Transverse colon (tissue), 4 donors: ENCODE measurements at regions of chr20 and their contacts with region 1.

Region 1: GRCh38 chr20:39874049-39874888 is 814.8 kb downstream of the MAFB start:
- DNase-seq: peak; percentile 72
- H3K4me3 ChIP-seq: no peak overlapping the region
- H3K27ac ChIP-seq: no peak overlapping the region
- H3K4me1 ChIP-seq: peaks cover 0 to 8% (median 0%) of the 10 kb centered on the region in 4 donors
- H3K27me3 ChIP-seq: no peaks in the 10 kb centered on the region
- CTCF ChIP-seq: peak; percentile 61 to 84 (median 76)
- EP300 ChIP-seq: no peak
- POLR2A ChIP-seq: no peak

Region 2: GRCh38 chr20:39264506-39265172 is 609.6 kb before region 1 on chr20:
- in situ Hi-C with region 1: loop called in 1 of 4 experiments (anchors 25 kb)
- intact Hi-C with region 1: loop called (anchors 10 kb)
- DNase-seq: peak; percentile 42
- H3K4me3 ChIP-seq: no peak overlapping the region
- H3K27ac ChIP-seq: no peak overlapping the region
- H3K4me1 ChIP-seq: no peaks in the 10 kb centered on the region
- H3K27me3 ChIP-seq: no peaks in the 10 kb centered on the region
- CTCF ChIP-seq: peak; percentile 63 to 81 (median 75)
- EP300 ChIP-seq: no peak
- POLR2A ChIP-seq: no peak

Region 3: DNA sequence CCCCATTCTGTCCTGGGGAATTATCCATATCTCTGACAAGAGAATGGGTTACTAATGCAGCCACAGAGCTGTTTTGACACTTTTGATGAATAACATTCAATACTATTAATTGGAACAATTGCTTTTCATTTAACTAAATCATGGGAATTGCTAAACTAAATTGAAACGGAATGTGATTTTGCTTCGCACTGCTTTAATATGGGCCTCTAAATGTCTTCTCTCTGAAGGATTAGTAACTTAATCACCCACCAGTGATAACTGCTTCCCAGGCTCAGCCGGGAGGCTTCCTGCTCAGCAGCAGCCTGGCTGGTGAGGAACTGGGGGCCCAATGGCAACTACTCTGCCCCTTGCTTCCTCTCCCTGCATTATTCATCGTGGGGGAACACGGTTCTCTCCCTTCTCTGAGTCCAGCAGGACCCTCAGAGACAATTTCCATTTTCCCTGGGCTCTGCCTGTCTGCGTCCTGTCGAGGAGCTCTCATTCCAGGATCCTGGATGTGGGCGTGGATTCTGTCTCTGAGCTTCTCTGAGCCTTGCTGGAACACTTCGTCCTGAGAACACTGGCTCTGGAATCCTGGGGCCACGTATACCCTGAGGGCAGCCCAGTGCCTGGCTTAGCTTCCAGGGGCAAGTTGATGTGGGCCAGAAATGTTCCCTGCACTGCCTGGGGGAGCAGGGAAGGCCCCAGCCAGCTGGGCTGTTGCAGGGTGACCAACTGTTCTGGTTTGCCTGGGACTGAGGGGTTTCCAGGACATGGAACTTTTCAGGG is 603.2 kb before region 1 on chr20:
- in situ Hi-C with region 1: loop called in 3 of 4 experiments (anchors 10 to 25 kb)
- intact Hi-C with region 1: loop called (anchors 10 kb)
- DNase-seq: no peak
- H3K4me3 ChIP-seq: no peak overlapping the region
- H3K27ac ChIP-seq: no peak overlapping the region
- H3K4me1 ChIP-seq: peaks cover 0 to 5% (median 2%) of the 10 kb centered on the region in 4 donors
- H3K27me3 ChIP-seq: no peaks in the 10 kb centered on the region
- CTCF ChIP-seq: no peak
- EP300 ChIP-seq: no peak
- POLR2A ChIP-seq: no peak

Region 4: DNA sequence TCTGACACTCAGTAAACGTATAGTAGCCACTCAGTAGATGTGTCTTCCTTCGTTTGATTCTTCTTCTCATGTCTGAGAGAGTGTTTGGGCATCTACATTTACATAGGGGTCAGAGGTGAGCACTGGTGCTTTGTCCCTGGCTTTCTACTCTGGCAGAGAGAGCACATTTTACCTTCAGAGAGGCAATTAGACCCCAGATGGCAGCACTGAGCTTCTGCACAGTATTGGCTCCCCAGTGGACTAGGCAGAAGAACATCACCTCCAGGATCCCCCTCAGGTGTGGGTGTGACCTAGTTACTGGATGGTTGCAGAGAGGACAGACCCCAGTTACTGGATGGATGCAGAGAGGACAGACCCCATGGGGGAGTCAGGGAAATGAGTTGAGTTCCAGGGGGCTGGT is 585.0 kb before region 1 on chr20:
- in situ Hi-C with region 1: loop called in 2 of 4 experiments (anchors 10 to 25 kb)
- intact Hi-C with region 1: no loop called
- DNase-seq: no peak
- H3K4me3 ChIP-seq: no peak overlapping the region
- H3K27ac ChIP-seq: no peak overlapping the region
- H3K4me1 ChIP-seq: no peaks in the 10 kb centered on the region
- H3K27me3 ChIP-seq: no peaks in the 10 kb centered on the region
- CTCF ChIP-seq: peak in 2 of 5 experiments; percentile 11 to 22
- EP300 ChIP-seq: no peak
- POLR2A ChIP-seq: no peak

Region 5: DNA sequence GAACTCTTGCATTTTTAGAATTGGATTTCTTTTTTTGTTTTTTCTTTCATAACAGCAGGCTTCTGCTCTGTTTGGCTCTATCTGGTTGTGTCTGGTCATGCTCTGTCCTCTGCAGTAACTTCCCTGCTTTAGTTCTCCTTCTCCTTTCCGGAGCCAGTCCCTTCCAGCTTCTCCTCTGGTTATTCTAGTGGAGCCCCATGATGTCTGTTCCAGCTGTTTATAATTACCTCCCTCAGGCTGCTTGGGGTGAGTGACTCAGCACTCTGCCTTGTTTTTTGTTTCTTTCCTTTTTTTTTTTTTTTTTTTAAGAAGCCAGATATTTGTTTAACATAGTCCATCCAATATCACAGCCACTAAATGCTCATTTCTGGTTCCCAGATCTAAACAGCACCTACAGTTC is 405.1 kb after region 1 on chr20:
- in situ Hi-C with region 1: no loop called
- intact Hi-C with region 1: no loop called
- DNase-seq: peak; percentile 13
- H3K4me3 ChIP-seq: no peak overlapping the region
- H3K27ac ChIP-seq: peak overlapping the region; percentile 21 to 43 (median 31)
- H3K4me1 ChIP-seq: peaks cover 0 to 7% (median 0%) of the 10 kb centered on the region in 4 donors
- H3K27me3 ChIP-seq: no peaks in the 10 kb centered on the region
- CTCF ChIP-seq: no peak
- EP300 ChIP-seq: no peak
- POLR2A ChIP-seq: no peak